Motor neuron (in vitro differentiated cells): ENCODE measurements at regions of chr13 and their contacts with region 1.

Region 1: DNA sequence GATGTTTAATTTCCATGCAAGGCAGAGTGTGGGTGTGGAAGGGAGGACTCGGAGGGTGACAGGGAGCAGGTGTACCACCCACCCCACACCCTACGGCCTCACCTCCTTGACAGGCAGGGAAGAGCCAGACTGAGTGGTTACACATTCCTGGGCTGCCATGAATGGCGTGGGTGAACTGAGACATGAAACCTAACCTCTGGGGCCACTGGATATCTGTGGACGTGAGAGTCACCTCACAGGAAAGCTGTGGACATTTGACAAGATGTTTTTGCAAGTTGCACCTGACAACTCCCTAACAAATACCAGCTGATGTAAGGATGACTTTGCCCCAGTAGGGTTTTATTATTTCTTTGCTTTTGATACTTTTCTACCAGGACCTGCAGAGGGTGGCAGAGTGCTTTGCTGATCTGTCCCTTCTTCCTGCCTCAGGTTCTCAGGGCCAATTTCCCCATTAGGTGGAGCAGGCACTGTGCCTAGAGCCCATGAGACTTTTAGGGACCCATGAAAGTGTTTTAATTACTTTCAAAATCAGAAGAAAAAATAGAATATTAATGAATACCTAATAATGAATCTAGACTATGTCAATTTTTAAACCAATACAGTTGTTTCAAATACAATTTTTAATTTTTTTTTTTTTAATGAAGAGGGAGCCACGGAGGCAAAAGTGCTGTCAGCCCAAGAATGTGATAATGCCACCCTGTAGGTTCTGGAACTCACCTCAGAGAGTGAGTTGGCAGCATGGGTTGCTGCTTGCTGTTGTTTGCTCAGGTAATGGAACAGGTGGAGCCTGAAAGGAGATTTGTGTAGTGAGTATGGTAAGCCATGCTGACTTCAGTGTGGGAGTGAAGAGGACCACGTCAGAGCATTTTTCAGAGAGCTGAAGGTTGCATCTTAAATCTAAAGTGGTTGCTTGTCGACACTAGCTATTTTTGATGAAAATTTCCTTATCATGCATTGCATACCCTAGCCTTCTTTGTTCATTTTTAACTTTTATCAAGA is 58.0 kb upstream of the CYSLTR2 start:
- ATAC-seq: peak in 7 of 8 experiments; percentile 6 to 77 (median 37)
- H3K4me3 ChIP-seq: no peak overlapping the region
- H3K27ac ChIP-seq: peak overlapping the region in 1 of 2 donors; percentile 69
- H3K4me1 ChIP-seq: peaks cover 25 to 40% of the 10 kb centered on the region in 2 donors

Region 2: GRCh38 chr13:47708386-47708785 is 887.3 kb before region 1 on chr13:
- in situ Hi-C with region 1: no loop called
- ATAC-seq: peak in 1 of 8 experiments; percentile 51
- H3K4me3 ChIP-seq: no peak overlapping the region
- H3K27ac ChIP-seq: no peak overlapping the region
- H3K4me1 ChIP-seq: peaks cover 0 to 11% of the 10 kb centered on the region in 2 donors

Region 3: DNA sequence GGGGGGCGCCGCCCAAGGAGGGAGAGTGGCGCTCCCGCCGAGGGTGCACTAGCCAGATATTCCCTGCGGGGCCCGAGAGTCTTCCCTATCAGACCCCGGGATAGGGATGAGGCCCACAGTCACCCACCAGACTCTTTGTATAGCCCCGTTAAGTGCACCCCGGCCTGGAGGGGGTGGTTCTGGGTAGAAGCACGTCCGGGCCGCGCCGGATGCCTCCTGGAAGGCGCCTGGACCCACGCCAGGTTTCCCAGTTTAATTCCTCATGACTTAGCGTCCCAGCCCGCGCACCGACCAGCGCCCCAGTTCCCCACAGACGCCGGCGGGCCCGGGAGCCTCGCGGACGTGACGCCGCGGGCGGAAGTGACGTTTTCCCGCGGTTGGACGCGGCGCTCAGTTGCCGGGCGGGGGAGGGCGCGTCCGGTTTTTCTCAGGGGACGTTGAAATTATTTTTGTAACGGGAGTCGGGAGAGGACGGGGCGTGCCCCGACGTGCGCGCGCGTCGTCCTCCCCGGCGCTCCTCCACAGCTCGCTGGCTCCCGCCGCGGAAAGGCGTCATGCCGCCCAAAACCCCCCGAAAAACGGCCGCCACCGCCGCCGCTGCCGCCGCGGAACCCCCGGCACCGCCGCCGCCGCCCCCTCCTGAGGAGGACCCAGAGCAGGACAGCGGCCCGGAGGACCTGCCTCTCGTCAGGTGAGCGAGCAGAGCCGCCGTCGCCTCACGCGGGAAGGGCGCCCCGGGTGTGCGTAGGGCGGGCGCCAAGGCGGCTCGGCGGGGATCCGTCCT is 292.2 kb before region 1 on chr13 and contains the start of gene RB1:
- in situ Hi-C with region 1: loop called in 1 of 9 experiments (anchors 25 kb)
- ATAC-seq: peak; percentile 93 to 96 (median 94)
- H3K4me3 ChIP-seq: peak within 1 kb of the TSS; percentile 88 to 98 (median 93)
- H3K27ac ChIP-seq: peak within 1 kb of the TSS; percentile 85 to 93
- H3K4me1 ChIP-seq: peaks cover 5 to 9% of the 10 kb centered on the region in 2 donors
- total RNA-seq, gene RB1: 20.1 to 47.5 (median 23.2) TPM

Region 4: GRCh38 chr13:48334534-48335127 is 261.1 kb before region 1 on chr13:
- in situ Hi-C with region 1: loop called in 1 of 9 experiments (anchors 25 kb)
- ATAC-seq: peak in 3 of 8 experiments; percentile 62 to 68 (median 65)
- H3K4me3 ChIP-seq: no peak overlapping the region
- H3K27ac ChIP-seq: no peak overlapping the region
- H3K4me1 ChIP-seq: no peaks in the 10 kb centered on the region